Activated B cell treated with CpG ODN at 0.5 μM for 24 hours (primary cell): ENCODE measurements at regions of chr13 and their contacts with region 1.

Region 1: GRCh38 chr13:49996951-49997895 is at the start of gene TRIM13:
- DNase-seq: peak; percentile 82
- ATAC-seq: peak; percentile 72
- H3K4me3 Mint-ChIP-seq: peak within 1 kb of the TSS; percentile 88
- H3K27ac Mint-ChIP-seq: peak within 1 kb of the TSS; percentile 93
- H3K4me1 Mint-ChIP-seq: peaks cover 54% of the 10 kb centered on the region
- H3K27me3 Mint-ChIP-seq: no peaks in the 10 kb centered on the region
- CTCF ChIP-seq: peak; percentile 49
- total RNA-seq, gene TRIM13: 49.3 and 54.4 TPM in 2 replicates

Region 2: GRCh38 chr13:49214917-49215376 is 782.3 kb before region 1 on chr13:
- CTCF ChIA-PET with region 1: no interaction called
- POLR2A ChIA-PET with region 1: no interaction called
- intact Hi-C with region 1: no loop called
- DNase-seq: no peak
- ATAC-seq: peak; percentile 71
- H3K4me3 Mint-ChIP-seq: no peak overlapping the region
- H3K27ac Mint-ChIP-seq: peak overlapping the region; percentile 59
- H3K4me1 Mint-ChIP-seq: peaks cover 41% of the 10 kb centered on the region
- H3K27me3 Mint-ChIP-seq: peaks cover 28% of the 10 kb centered on the region
- CTCF ChIP-seq: no peak

Region 3: GRCh38 chr13:49976314-49977258 is 20.6 kb before region 1 on chr13:
- CTCF ChIA-PET with region 1: interaction called, 28 read pairs
- POLR2A ChIA-PET with region 1: interaction called, 15 read pairs
- intact Hi-C with region 1: loop called (anchors 1 kb)
- DNase-seq: peak; percentile 57
- ATAC-seq: peak; percentile 86
- H3K4me3 Mint-ChIP-seq: no peak overlapping the region
- H3K27ac Mint-ChIP-seq: no peak overlapping the region
- H3K4me1 Mint-ChIP-seq: peaks cover 2% of the 10 kb centered on the region
- H3K27me3 Mint-ChIP-seq: no peaks in the 10 kb centered on the region
- CTCF ChIP-seq: no peak

Region 4: GRCh38 chr13:50081679-50082425 is 84.6 kb after region 1 on chr13:
- CTCF ChIA-PET with region 1: interaction called, 29 read pairs
- POLR2A ChIA-PET with region 1: interaction called, 214 read pairs
- intact Hi-C with region 1: loop called (anchors 1 kb)
- DNase-seq: peak; percentile 95
- ATAC-seq: peak; percentile 73
- H3K4me3 Mint-ChIP-seq: peak overlapping the region; percentile 100
- H3K27ac Mint-ChIP-seq: peak overlapping the region; percentile 100
- H3K4me1 Mint-ChIP-seq: peaks cover 62% of the 10 kb centered on the region
- H3K27me3 Mint-ChIP-seq: no peaks in the 10 kb centered on the region
- CTCF ChIP-seq: no peak

Region 5: GRCh38 chr13:50236898-50237318 is 239.7 kb after region 1 on chr13:
- CTCF ChIA-PET with region 1: interaction called, 8 read pairs
- POLR2A ChIA-PET with region 1: interaction called, 14 read pairs
- intact Hi-C with region 1: loop called (anchors 2 kb)
- DNase-seq: no peak
- ATAC-seq: peak; percentile 90
- H3K4me3 Mint-ChIP-seq: peak overlapping the region; percentile 55
- H3K27ac Mint-ChIP-seq: peak overlapping the region; percentile 92
- H3K4me1 Mint-ChIP-seq: peaks cover 53% of the 10 kb centered on the region
- H3K27me3 Mint-ChIP-seq: no peaks in the 10 kb centered on the region
- CTCF ChIP-seq: no peak

Region 6: DNA sequence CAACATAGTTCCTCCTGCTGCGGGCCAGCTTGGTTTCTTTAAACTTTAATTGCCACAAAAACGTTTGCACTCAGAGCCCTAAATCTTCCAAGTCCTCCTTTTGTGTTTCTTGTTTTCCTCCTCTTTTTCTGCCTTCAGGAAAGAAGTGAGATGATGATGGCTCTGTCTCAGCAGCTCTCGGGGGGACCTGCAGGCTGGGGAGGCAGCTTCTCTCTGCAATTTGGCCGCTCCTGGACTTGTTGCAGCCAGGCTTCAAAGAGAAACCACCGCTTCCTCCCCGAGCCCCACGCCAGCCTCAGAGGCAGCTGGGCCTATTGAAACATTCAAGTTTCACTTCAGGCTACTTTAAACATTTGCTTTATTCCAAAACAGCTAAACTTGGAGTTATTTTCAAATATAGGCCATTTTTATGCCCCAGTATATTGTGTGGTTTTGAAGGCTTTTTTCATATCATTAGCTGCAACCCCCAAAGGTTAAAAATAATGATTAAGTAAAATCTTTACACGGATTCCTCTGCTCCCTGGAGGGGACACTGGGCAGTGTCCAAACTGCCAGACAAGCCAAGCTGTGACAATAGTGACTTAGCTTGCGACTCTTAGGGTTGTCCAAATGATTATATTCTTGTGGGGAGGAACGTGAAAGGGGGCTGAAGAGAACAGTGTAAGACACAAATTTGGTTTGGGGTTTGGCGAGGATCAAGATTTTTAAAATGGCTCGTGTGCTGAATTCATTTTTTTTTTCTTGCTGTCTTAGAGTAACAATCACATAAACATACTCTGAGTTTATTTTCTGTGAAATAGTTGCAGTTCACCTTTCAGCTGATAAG is 515.5 kb after region 1 on chr13:
- CTCF ChIA-PET with region 1: interaction called, 3 read pairs
- POLR2A ChIA-PET with region 1: interaction called, 28 read pairs
- intact Hi-C with region 1: no loop called
- DNase-seq: peak; percentile 40
- ATAC-seq: peak; percentile 81
- H3K4me3 Mint-ChIP-seq: no peak overlapping the region
- H3K27ac Mint-ChIP-seq: no peak overlapping the region
- H3K4me1 Mint-ChIP-seq: peaks cover 3% of the 10 kb centered on the region
- H3K27me3 Mint-ChIP-seq: no peaks in the 10 kb centered on the region
- CTCF ChIP-seq: no peak

Region 7: DNA sequence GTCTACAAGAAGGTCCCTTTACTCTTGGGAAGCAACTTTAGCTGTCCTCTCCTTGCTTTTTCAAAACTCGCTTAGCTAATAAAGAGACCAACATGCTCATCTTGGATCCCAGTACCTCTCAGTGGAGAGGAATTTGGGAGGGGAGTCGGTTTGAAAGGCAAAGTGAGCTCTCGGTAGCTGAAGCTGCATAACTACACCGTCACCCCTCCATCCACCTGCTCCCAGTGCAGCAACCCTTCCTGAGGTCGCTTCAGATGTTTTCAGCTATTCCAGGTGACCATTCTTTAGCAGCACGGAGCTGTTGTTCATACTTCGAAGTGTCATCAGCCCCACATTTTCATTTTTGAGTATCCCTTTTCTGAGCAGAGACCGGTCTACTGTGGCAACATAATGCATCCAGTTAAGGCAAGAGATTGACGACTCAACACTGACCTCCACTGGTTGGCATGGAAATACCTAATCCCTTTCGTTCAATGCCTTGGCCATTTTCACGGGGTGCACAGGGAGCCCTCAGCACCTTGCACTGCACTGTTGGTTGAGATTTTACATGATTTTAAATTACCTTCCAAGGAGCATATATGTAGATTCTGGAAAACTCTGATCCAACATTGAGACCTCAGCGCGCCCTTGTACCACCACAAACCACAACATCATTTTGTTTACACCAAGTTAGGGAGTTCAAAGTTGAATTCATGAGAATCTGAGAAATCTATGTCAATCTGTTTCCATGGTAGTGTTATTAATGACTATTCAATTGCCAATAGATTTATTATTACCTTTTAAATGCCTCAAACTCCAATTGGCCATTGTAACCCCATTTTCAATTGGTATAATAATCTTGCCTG is 804.1 kb after region 1 on chr13:
- CTCF ChIA-PET with region 1: interaction called, 27 read pairs
- POLR2A ChIA-PET with region 1: interaction called, 66 read pairs
- intact Hi-C with region 1: loop called (anchors 1 kb)
- DNase-seq: peak; percentile 39
- ATAC-seq: peak; percentile 74
- H3K4me3 Mint-ChIP-seq: peak overlapping the region; percentile 64
- H3K27ac Mint-ChIP-seq: peak overlapping the region; percentile 95
- H3K4me1 Mint-ChIP-seq: peaks cover 40% of the 10 kb centered on the region
- H3K27me3 Mint-ChIP-seq: no peaks in the 10 kb centered on the region
- CTCF ChIP-seq: no peak